H1 (cell line): ENCODE measurements at regions of chr1 and their contacts with region 1.

Region 1: GRCh38 chr1:225987491-225988316 is 11.4 kb downstream of the SDE2 start:
- DNase-seq: no peak
- H3K4me3 ChIP-seq: no peak overlapping the region
- H3K27ac ChIP-seq: no peak overlapping the region
- H3K4me1 ChIP-seq: no peaks in the 10 kb centered on the region
- H3K27me3 ChIP-seq: no peaks in the 10 kb centered on the region
- CTCF ChIP-seq: peak in 2 of 3 experiments; percentile 18 to 60; a peak in 2 of 4 replicates
- EP300 ChIP-seq: no peak
- POLR2A ChIP-seq: no peak
- RAD21 ChIP-seq: peak; percentile 30 to 35

Region 2: DNA sequence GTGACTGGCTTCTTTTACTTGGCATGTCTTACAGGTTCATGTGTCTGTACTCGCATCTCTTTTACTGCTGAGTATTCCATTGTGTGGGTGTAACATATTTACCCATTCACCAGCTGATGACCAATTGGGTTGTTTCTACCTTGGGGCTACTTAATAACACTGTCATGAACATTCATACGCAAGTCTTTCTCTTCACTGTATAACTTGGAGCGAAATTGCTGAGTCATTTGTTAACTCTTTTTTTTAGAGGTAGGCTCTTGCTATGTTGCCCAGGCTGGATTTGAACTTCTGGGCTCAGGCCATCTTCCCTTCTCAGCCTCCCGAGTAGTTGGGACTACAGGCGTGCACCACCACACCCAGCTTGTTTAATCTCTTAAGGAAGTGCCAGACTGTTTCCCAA is 70.2 kb before region 1 on chr1:
- CTCF ChIA-PET with region 1: interaction called, 10 read pairs
- POLR2A ChIA-PET with region 1: no interaction called
- DNase-seq: no peak
- H3K4me3 ChIP-seq: no peak overlapping the region
- H3K27ac ChIP-seq: no peak overlapping the region
- H3K4me1 ChIP-seq: peaks cover 0 to 2% (median under 1%) of the 10 kb centered on the region in 4 experiments; a peak in 3 of 7 replicates
- H3K27me3 ChIP-seq: no peaks in the 10 kb centered on the region
- CTCF ChIP-seq: no peak
- EP300 ChIP-seq: no peak
- POLR2A ChIP-seq: no peak
- RAD21 ChIP-seq: no peak

Region 3: DNA sequence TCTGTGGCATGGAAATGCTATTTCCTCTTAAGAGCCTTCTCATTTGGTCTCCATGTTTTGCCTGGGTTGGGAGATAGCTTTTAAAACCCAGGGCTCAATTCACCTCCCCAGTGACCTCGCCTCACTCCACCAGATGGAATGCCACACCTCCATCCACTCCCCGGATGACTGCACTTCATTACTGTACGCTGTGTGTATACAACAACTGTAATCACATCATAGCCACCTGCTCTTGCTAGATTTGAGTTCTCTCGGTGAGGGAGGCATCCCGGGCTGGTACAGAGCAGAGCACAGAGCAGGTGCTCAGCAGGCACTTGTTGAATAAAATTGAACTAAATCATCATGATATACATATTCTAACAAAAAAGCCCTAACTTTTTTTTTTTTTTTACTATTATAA is 14.5 kb before region 1 on chr1:
- CTCF ChIA-PET with region 1: interaction called, 25 read pairs
- POLR2A ChIA-PET with region 1: interaction called, 3 read pairs
- DNase-seq: no peak
- H3K4me3 ChIP-seq: no peak overlapping the region
- H3K27ac ChIP-seq: no peak overlapping the region
- H3K4me1 ChIP-seq: no peaks in the 10 kb centered on the region
- H3K27me3 ChIP-seq: no peaks in the 10 kb centered on the region
- CTCF ChIP-seq: no peak
- EP300 ChIP-seq: no peak
- POLR2A ChIP-seq: no peak
- RAD21 ChIP-seq: no peak

Region 4: DNA sequence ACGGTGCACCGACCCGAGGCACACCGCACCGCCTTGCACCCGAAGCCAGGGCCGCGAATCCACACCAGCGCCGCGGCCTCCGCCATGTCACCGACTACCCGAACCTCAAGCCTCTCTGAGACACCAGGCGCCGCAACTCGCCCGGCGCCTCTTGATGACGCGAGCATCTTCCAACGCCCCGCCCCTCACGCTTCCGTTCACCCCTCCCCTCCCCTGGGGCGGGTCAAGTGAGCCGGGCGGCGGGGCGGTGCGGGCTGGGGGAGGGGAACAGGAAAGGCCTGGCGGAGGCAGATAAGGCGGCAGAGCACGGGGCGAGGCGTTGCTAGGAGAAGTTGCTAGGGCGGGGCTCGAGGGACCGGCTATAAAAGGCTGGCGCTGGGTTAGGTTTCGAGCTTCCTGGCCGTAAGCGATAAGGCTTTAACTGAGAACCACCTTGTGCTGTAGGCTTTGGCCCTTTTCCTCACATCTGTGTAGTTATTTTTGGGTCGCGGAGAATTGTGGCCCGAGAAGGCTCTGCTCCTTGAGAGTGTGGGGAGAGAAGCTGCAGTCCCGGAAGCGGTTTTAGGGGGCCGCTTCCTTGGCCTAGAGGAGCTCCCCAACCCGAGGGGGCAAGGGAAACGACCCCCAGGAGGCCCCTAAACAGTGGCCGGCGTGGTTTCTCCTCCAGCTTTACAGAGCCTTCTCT is 11.7 kb after region 1 on chr1 and contains the start of gene SDE2:
- CTCF ChIA-PET with region 1: interaction called, 32 read pairs
- POLR2A ChIA-PET with region 1: interaction called, 8 read pairs
- DNase-seq: peak; percentile 98 to 99
- H3K4me3 ChIP-seq: peak within 1 kb of the TSS; percentile 90 to 99 (median 96)
- H3K27ac ChIP-seq: peak within 1 kb of the TSS; percentile 76
- H3K4me1 ChIP-seq: peaks cover 7 to 16% (median 13%) of the 10 kb centered on the region in 4 experiments
- H3K27me3 ChIP-seq: no peaks in the 10 kb centered on the region
- CTCF ChIP-seq: no peak; a peak in 1 of 4 replicates
- EP300 ChIP-seq: peak in 1 of 2 experiments; percentile 83; a peak in 1 of 3 replicates
- POLR2A ChIP-seq: peak; percentile 98 to 99
- RAD21 ChIP-seq: peak in 1 of 2 experiments; percentile 10; a peak in 1 of 4 replicates
- total RNA-seq, gene SDE2: 16.5 and 16.7 TPM in 2 replicates